GM12878 (cell line): ENCODE measurements at regions of chr2 and their contacts with region 1.

Region 1: GRCh38 chr2:29196792-29197788 is 81.9 kb downstream of the CLIP4 start:
- DNase-seq: peak; percentile 34
- ATAC-seq: peak; percentile 100
- H3K4me3 ChIP-seq: no peak overlapping the region
- H3K27ac ChIP-seq: no peak overlapping the region
- H3K4me1 ChIP-seq: no peaks in the 10 kb centered on the region
- H3K27me3 ChIP-seq: no peaks in the 10 kb centered on the region
- CTCF ChIP-seq: peak; percentile 83 to 97 (median 88); a peak in 5 of 6 replicates
- EP300 ChIP-seq: no peak
- POLR2A ChIP-seq: no peak
- RAD21 ChIP-seq: peak; percentile 99

Region 2: DNA sequence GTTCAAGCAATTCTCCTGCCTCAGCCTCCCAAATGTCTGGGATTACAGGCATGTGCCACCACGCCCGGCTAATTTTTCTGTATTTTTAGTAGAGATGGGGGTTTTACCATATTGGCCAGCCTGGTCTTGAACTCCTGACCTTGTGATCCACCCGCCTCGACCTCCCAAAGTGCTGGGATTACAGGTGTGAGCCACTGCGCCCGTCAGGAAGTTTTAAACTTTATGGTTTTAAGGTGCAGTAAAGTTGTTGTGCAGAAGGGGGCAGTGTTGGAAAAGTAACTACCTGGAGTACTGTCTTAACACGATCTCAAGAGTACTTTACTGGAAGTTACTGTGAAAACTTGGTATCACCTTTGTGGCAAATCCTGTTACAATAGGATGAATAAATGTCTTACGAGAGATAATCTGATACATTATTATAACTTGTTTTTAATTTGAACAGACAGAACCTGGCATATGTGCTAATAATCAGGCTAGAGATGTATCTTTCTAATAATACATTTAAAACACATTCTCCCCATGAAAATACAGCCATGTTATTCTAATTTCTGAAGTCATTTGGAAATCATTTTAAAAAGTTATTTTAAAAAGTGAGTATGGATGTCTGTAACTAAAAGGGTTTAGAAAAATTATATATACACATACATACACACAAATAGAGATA is 375.7 kb before region 1 on chr2:
- CTCF ChIA-PET with region 1: interaction called, 4 read pairs
- POLR2A ChIA-PET with region 1: no interaction called
- RAD21 ChIA-PET with region 1: interaction called, 3 read pairs
- SMC1A ChIA-PET with region 1: no interaction called
- in situ Hi-C with region 1: loop called (anchors 5 kb)
- intact Hi-C with region 1: loop called (anchors 5 kb)
- DNase-seq: peak; percentile 25
- ATAC-seq: peak; percentile 89
- H3K4me3 ChIP-seq: no peak overlapping the region
- H3K27ac ChIP-seq: no peak overlapping the region
- H3K4me1 ChIP-seq: no peaks in the 10 kb centered on the region
- H3K27me3 ChIP-seq: no peaks in the 10 kb centered on the region
- CTCF ChIP-seq: peak; percentile 65 to 75 (median 67)
- EP300 ChIP-seq: no peak
- POLR2A ChIP-seq: no peak
- RAD21 ChIP-seq: peak; percentile 79

Region 3: DNA sequence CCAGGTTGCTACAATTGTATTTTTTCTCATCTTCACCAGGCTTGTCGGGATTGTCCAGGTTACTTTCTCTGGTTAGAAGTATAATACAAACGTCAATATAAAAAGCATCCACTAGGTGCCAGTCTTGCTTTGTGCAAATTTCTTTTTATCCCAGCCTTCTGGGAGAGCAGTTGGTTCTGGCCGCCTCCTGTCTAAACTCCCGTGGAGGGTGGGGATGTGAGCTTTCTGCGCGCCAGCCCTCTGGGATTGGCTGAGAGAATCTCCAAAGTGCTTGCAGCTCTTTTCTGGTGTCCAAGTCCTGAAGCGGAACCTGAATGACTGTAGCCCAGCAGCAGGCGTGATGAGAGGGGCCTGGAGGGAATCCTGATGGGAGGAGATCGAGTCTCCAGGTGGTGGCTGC is 238.4 kb before region 1 on chr2:
- CTCF ChIA-PET with region 1: interaction called, 4 read pairs
- POLR2A ChIA-PET with region 1: no interaction called
- RAD21 ChIA-PET with region 1: interaction called, 3 read pairs
- SMC1A ChIA-PET with region 1: interaction called, 6 read pairs
- in situ Hi-C with region 1: loop called (anchors 5 kb)
- intact Hi-C with region 1: loop called (anchors 1 kb)
- DNase-seq: peak; percentile 25
- ATAC-seq: peak; percentile 91
- H3K4me3 ChIP-seq: no peak overlapping the region
- H3K27ac ChIP-seq: no peak overlapping the region
- H3K4me1 ChIP-seq: no peaks in the 10 kb centered on the region
- H3K27me3 ChIP-seq: no peaks in the 10 kb centered on the region
- CTCF ChIP-seq: peak; percentile 47 to 74 (median 68); a peak in 5 of 6 replicates
- EP300 ChIP-seq: no peak
- POLR2A ChIP-seq: no peak
- RAD21 ChIP-seq: peak; percentile 95

Region 4: DNA sequence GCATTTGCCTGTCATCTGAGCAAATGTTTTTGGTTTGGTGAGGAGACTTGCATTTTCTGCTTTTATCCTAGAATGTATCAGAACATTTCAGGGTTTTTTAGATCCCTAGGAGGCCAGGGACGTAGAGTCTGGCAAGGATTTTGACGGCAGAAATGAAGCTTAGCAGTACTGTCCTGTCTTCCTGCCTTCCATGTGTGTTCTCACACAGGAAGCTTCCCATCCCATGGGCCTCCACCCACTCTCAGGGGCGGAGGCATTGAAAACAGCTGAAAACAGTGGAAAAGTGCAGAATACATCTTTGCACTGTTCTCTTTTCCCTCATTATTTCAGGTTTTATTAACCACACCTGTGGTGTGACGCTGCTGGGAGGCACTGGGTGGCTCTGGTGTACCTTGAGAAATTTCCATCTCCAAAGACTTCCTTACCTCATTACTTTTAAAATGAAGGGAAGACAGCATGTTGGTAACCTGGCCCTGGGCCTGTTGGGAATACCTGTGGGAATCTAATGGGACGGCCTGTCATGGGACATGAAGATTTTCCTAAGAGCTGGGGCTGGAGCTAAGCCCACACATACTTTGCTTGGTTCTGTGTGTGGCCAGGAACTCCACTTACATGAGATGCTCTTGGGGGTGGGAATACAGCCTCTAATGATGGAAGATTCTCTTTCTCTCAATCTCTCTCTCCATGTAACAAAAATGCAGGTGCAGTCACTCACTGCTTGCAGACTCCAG is 143.3 kb before region 1 on chr2:
- CTCF ChIA-PET with region 1: no interaction called
- POLR2A ChIA-PET with region 1: no interaction called
- RAD21 ChIA-PET with region 1: interaction called, 3 read pairs
- SMC1A ChIA-PET with region 1: interaction called, 3 read pairs
- in situ Hi-C with region 1: no loop called
- intact Hi-C with region 1: loop called (anchors 1 kb)
- DNase-seq: no peak
- ATAC-seq: no peak; the same call in 2 of the 3 replicates
- H3K4me3 ChIP-seq: no peak overlapping the region
- H3K27ac ChIP-seq: no peak overlapping the region
- H3K4me1 ChIP-seq: no peaks in the 10 kb centered on the region
- H3K27me3 ChIP-seq: peaks cover 0 to 2% of the 10 kb centered on the region in 2 experiments; a peak in 1 of 4 replicates
- CTCF ChIP-seq: peak; percentile 24 to 31 (median 25); a peak in 4 of 6 replicates
- EP300 ChIP-seq: no peak
- POLR2A ChIP-seq: no peak
- RAD21 ChIP-seq: peak; percentile 62

Region 5: GRCh38 chr2:29115797-29116781 is 81.0 kb before region 1 on chr2:
- CTCF ChIA-PET with region 1: no interaction called
- POLR2A ChIA-PET with region 1: no interaction called
- RAD21 ChIA-PET with region 1: no interaction called
- SMC1A ChIA-PET with region 1: no interaction called
- in situ Hi-C with region 1: no loop called
- intact Hi-C with region 1: loop called (anchors 5 kb)
- DNase-seq: peak; percentile 78
- ATAC-seq: peak; percentile 64
- H3K4me3 ChIP-seq: peak overlapping the region; percentile 86
- H3K27ac ChIP-seq: peak overlapping the region; percentile 83
- H3K4me1 ChIP-seq: peaks cover 32% of the 10 kb centered on the region
- H3K27me3 ChIP-seq: no peaks in the 10 kb centered on the region
- CTCF ChIP-seq: no peak
- EP300 ChIP-seq: no peak
- POLR2A ChIP-seq: peak; percentile 51; the same call in 1 of the 2 replicates
- RAD21 ChIP-seq: no peak

Region 6: DNA sequence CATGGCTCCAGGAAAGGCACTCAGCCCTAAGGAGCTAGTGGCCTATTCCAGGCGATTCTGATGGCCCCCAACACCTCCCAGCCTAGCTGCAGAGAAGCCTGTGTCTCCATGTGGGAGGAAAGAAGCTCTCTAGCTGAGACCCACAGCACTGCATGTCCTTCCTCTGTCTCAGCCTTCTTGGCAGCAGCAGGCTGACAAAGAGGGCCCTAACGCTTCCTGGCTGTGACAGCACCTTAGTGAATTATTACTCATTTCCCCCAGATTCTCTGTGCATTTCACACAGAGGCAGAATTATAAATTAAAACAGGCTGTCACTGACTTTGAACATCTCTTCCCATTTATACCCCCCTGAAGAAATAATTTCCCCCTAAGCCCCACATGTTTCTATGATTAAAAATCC is 124.9 kb after region 1 on chr2:
- CTCF ChIA-PET with region 1: no interaction called
- POLR2A ChIA-PET with region 1: no interaction called
- RAD21 ChIA-PET with region 1: no interaction called
- SMC1A ChIA-PET with region 1: no interaction called
- in situ Hi-C with region 1: no loop called
- intact Hi-C with region 1: no loop called
- DNase-seq: no peak
- ATAC-seq: peak; percentile 47
- H3K4me3 ChIP-seq: no peak overlapping the region
- H3K27ac ChIP-seq: no peak overlapping the region
- H3K4me1 ChIP-seq: peaks cover 13% of the 10 kb centered on the region
- H3K27me3 ChIP-seq: no peaks in the 10 kb centered on the region
- CTCF ChIP-seq: no peak
- EP300 ChIP-seq: no peak
- POLR2A ChIP-seq: no peak
- RAD21 ChIP-seq: no peak